Posterior vena cava (tissue), 2 donors: ENCODE measurements at regions of chr10 and their contacts with region 1.

Region 1: DNA sequence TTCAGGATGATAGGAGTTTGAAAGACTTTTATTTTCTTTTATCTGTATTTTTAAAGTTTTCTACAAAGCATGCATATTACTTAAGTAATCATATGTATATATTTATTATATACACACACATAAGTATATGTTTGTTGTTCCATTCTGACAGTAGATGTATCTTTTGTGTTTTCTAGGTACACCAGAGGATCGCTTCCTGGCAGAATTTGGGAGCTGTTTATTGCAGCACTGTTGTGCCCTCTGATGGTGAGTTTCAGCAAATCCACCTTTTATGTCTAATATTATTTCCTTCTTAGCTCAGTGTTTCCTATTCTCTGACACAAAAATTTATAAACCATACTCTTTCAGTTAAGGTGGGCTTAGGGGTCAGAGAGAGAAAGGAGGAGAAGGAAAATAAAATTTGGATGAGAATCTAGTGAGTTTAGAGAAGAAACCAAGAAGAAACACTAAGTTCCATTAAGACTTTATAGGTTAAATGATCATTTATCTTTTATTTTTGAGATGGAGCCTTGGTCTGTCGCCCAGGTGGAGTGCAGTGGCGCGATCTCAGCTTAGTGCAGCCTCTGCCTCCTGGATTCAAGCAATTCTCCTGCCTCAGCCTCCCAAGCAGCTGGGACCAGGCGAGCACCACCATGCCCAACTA is 59.2 kb upstream of the OIT3 start:
- DNase-seq: no peak

Region 2: DNA sequence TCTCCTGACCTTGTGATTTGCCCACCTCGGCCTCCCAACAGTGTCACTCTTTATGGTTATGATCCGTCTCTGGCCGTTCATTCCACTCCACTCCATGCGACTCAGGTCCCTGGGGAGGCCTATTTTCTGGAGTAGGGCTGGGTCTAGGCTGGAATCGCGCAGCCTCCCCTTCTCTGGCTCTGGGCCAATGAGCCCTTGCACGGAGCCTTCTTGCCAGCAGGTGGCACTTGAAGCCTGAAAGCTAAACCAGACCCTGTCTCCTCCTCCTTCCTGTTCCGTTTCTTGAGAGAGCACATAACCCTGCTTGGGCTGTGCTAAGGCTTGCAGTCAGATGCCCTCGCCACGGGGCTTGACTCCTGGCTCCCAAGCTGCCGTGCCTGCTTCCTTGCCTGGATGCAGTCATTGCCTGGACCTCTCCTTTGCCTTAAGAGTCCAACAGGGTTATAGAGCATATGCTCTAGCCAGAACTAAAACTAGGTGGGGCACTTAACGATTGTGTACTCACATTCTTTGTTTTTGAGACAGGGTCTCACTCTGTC is 470.0 kb before region 1 on chr10:
- intact Hi-C with region 1: loop called in 1 of 2 experiments (anchors 10 kb)
- DNase-seq: peak; percentile 96

Region 3: DNA sequence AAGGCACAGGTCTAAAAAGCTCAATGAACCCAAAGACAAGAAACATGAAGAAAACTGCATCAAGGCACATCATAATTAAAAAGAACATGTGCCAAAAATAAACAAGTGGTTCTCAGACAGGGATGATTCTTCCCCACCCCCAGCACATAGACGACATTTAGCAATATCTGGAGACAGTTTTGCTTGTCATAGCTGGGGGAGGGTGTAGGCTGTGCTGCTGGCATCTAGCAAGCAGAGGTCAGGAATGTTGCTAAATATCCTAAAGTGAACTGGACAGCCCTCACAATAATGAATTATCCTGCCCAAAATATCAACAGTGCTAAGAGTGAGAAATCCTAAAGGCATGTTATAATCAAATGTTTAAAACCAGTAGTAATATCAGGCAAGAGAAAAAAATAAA is 331.1 kb before region 1 on chr10:
- intact Hi-C with region 1: no loop called
- DNase-seq: no peak

Region 4: DNA sequence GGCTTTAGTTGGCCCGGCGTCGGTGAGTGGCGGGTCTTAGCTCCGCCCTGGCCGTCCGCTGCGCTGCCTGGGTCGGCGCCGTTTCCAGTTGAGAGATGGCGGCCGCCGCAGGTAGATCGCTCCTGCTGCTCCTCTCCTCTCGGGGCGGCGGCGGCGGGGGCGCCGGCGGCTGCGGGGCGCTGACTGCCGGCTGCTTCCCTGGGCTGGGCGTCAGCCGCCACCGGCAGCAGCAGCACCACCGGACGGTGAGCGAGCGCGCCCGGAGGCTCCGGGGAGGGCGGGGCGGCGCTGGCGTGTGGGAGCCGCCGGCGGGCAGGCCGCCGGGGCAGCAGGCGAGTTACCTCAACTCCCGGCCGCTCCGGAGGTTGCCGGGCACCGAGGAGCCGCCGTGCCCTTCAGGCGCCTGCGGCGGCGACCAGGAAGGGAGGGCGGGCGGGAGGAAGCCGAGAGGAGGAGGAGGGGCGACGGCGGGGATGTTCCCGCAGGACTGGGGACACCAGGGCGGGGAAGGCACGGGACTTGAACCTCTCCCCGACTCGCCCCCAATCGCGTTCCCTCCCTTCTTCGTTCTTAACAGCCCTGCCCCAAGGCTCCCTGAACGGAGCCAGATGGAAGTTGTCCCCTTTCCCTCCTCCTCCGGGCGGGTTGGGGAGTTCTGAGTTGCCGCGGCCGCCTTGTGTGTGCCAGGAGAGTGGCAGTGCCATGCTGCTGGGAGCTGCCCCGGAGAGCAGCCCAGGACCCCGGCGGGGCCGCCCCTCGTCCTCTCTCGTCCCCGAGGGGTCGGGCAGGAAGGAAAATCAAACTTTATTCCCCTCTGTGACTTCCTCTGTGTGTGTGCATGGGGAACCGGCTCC is 142.0 kb before region 1 on chr10 and contains the start of gene MCU:
- intact Hi-C with region 1: loop called in 1 of 2 experiments (anchors 5 kb)
- DNase-seq: peak; percentile 98
- total RNA-seq, gene MCU: 23.7 to 24.0 TPM

Region 5: GRCh38 chr10:72796042-72796441 is 38.3 kb before region 1 on chr10:
- intact Hi-C with region 1: loop called in 1 of 2 experiments (anchors 1 kb)
- DNase-seq: no peak

Region 6: DNA sequence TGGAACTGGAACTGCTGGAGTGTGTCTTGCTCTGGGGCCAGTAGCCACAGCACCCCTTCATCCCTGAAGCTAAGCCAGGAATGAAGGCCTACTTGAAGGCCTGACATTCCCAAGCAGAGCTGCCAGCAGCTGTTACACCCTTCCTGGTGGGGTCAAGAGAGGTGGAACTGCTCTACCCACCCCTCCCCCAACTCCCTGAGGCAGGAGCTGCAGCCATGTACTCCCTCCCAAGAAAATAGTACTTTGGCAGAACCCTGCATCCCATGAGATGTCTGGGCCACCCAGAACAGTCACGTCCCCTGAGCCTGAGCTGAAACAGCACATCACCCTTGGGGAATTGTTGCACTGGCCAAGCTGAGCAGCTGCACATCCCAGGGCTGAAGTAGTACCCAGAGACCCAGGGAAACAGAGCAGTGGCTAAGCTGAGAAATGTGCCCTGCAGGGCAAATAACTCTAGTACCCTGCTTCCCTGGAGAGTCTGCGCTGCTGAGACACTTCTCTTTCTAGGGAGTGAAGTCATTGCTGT is 183.7 kb after region 1 on chr10:
- intact Hi-C with region 1: no loop called
- DNase-seq: no peak